Activated T-helper 1 cell treated with anti-CD3 and anti-CD28 coated beads, Interleukin-12 subunit alpha, Interleukin-12 subunit beta, Interleukin-2, Interleukin-4 antibody, amounts not matched to agents 30 ng/mL and 10 ng/mL and 1 ng/mL, durations not matched to agents 14 hours and 24 hours and 36 hours (primary cell): ENCODE measurements at regions of chr7 and their contacts with region 1.

Region 1: GRCh38 chr7:76262683-76263402 is 39.6 kb upstream of the HSPB1 start:
- DNase-seq: no peak
- H3K4me3 Mint-ChIP-seq: no peak overlapping the region
- H3K27ac Mint-ChIP-seq: no peak overlapping the region
- H3K4me1 Mint-ChIP-seq: peaks cover 7% of the 10 kb centered on the region
- H3K27me3 Mint-ChIP-seq: peaks cover 30% of the 10 kb centered on the region

Region 2: GRCh38 chr7:75866489-75867389 is 396.1 kb before region 1 on chr7:
- intact Hi-C with region 1: loop called (anchors 1 kb)
- DNase-seq: no peak
- H3K4me3 Mint-ChIP-seq: no peak overlapping the region
- H3K27ac Mint-ChIP-seq: no peak overlapping the region
- H3K4me1 Mint-ChIP-seq: peaks cover 24% of the 10 kb centered on the region
- H3K27me3 Mint-ChIP-seq: peaks cover 8% of the 10 kb centered on the region

Region 3: DNA sequence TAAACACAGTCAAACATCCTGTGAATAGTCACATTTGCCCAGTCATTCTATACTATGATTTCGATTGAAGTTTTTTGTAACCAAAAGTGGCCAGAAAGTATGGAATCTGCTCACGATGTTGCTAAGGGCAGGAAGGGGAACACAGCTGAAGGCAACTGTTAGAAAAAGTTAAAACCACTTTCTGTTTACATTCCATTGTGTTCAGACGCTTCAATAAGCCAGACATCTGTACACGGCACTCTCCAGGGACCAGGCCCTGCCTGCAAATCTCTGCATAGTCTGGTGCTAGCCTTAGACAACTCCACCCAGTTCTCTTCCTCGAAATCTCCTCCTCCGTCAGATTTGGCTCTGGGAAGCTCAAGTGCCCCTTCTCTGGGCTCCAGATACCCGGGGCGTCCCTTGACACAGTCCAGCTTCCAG is 251.4 kb before region 1 on chr7:
- intact Hi-C with region 1: no loop called
- DNase-seq: no peak
- H3K4me3 Mint-ChIP-seq: no peak overlapping the region
- H3K27ac Mint-ChIP-seq: no peak overlapping the region
- H3K4me1 Mint-ChIP-seq: peaks cover 35% of the 10 kb centered on the region
- H3K27me3 Mint-ChIP-seq: peaks cover 5% of the 10 kb centered on the region

Region 4: GRCh38 chr7:76515999-76516443 is 253.2 kb after region 1 on chr7:
- intact Hi-C with region 1: no loop called
- DNase-seq: no peak
- H3K4me3 Mint-ChIP-seq: no peak overlapping the region
- H3K27ac Mint-ChIP-seq: no peak overlapping the region
- H3K4me1 Mint-ChIP-seq: no peaks in the 10 kb centered on the region
- H3K27me3 Mint-ChIP-seq: no peaks in the 10 kb centered on the region